ENCODE measurements at regions of chr2 and their contacts with region 1.

Region 1: GRCh38 chr2:108583903-108584520 is 49.7 kb downstream of the LIMS1 start:
- DNase-seq: peak; percentile 71 to 83 (median 79)
- H3K4me3 ChIP-seq: peak overlapping the region in 2 of 3 experiments; percentile 21 to 40
- H3K4me3 Mint-ChIP-seq: peak overlapping the region in 1 of 2 donors; percentile 30
- H3K27ac ChIP-seq: peak overlapping the region; percentile 85 to 99
- H3K27ac Mint-ChIP-seq: peak overlapping the region; percentile 79 to 100 (median 100)
- H3K4me1 ChIP-seq: peaks cover 57 to 62% of the 10 kb centered on the region in 2 donors
- H3K4me1 Mint-ChIP-seq: peaks cover 60% of the 10 kb centered on the region
- H3K27me3 ChIP-seq: no peaks in the 10 kb centered on the region
- H3K27me3 Mint-ChIP-seq: peaks cover 0 to 6% (median 0%) of the 10 kb centered on the region in 3 donors
- CTCF ChIP-seq: peak; percentile 82

Region 2: GRCh38 chr2:107936433-107937359 is 647.3 kb before region 1 on chr2:
- intact Hi-C with region 1: loop called in 1 of 2 experiments (anchors 5 kb)
- DNase-seq: no peak
- H3K4me3 ChIP-seq: no peak overlapping the region
- H3K4me3 Mint-ChIP-seq: no peak overlapping the region
- H3K27ac ChIP-seq: no peak overlapping the region
- H3K27ac Mint-ChIP-seq: no peak overlapping the region
- H3K4me1 ChIP-seq: no peaks in the 10 kb centered on the region
- H3K4me1 Mint-ChIP-seq: no peaks in the 10 kb centered on the region
- H3K27me3 ChIP-seq: no peaks in the 10 kb centered on the region
- H3K27me3 Mint-ChIP-seq: peaks cover 0 to 4% (median 2%) of the 10 kb centered on the region in 3 donors
- CTCF ChIP-seq: peak; percentile 54

Region 3: GRCh38 chr2:108351889-108352288 is 232.1 kb before region 1 on chr2:
- intact Hi-C with region 1: loop called in 1 of 2 experiments (anchors 5 kb)
- DNase-seq: no peak
- H3K4me3 ChIP-seq: no peak overlapping the region
- H3K4me3 Mint-ChIP-seq: no peak overlapping the region
- H3K27ac ChIP-seq: no peak overlapping the region
- H3K27ac Mint-ChIP-seq: no peak overlapping the region
- H3K4me1 ChIP-seq: peaks cover 0 to 8% of the 10 kb centered on the region in 2 donors
- H3K4me1 Mint-ChIP-seq: peaks cover 16% of the 10 kb centered on the region
- H3K27me3 ChIP-seq: no peaks in the 10 kb centered on the region
- H3K27me3 Mint-ChIP-seq: peaks cover 0 to 2% (median 1%) of the 10 kb centered on the region in 3 donors
- CTCF ChIP-seq: no peak

Region 4: DNA sequence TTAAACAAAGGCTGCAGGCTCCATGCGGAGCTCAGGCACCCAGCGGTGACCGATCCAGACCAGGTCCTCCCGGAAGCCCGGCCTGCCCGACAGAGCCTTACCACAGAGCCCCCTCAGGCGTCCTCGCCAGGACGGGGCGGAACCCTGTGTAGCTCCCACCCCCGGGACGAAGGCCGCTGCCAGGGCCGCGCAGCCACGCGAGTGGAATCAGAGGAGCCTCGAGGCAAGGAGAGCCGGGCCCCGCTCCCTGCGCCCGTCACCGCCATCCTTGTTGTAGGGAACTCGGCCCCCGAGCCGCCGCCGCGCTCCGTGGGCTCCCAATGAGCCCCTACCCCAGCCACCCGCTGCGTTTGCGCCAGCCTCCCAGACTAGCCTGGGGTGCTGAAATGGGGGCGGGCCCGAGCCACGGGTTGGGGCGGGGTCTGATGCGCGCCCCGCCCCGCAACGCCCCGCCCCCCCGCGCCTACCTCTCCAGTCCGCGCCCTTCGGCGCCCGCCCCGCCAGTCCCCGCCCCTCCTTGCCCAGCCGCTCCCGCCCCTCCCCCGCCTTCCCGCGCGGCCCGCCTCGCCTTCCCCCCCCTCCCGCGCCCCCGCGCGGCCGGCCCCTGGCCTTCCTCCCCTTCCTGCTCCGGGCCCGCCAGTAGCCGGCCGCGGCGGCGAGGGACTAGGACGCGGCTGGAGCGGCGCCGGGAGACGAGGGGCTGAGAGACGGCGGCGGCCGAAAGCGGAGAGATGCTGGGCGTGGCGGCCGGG is 50.0 kb before region 1 on chr2 and contains the start of gene LIMS1:
- intact Hi-C with region 1: loop called (anchors 5 kb)
- DNase-seq: peak; percentile 83 to 85 (median 84)
- H3K4me3 ChIP-seq: peak within 1 kb of the TSS; percentile 80 to 98 (median 81)
- H3K4me3 Mint-ChIP-seq: peak within 1 kb of the TSS; percentile 94 to 98
- H3K27ac ChIP-seq: peak within 1 kb of the TSS; percentile 72 to 87
- H3K27ac Mint-ChIP-seq: peak within 1 kb of the TSS; percentile 85 to 93 (median 91)
- H3K4me1 ChIP-seq: peaks cover 15 to 25% of the 10 kb centered on the region in 2 donors
- H3K4me1 Mint-ChIP-seq: peaks cover 43% of the 10 kb centered on the region
- H3K27me3 ChIP-seq: no peaks in the 10 kb centered on the region
- H3K27me3 Mint-ChIP-seq: peaks cover 0 to 1% (median 1%) of the 10 kb centered on the region in 3 donors
- CTCF ChIP-seq: no peak
- polyA plus RNA-seq, gene LIMS1: 44.0 to 130 (median 124) TPM

Region 5: DNA sequence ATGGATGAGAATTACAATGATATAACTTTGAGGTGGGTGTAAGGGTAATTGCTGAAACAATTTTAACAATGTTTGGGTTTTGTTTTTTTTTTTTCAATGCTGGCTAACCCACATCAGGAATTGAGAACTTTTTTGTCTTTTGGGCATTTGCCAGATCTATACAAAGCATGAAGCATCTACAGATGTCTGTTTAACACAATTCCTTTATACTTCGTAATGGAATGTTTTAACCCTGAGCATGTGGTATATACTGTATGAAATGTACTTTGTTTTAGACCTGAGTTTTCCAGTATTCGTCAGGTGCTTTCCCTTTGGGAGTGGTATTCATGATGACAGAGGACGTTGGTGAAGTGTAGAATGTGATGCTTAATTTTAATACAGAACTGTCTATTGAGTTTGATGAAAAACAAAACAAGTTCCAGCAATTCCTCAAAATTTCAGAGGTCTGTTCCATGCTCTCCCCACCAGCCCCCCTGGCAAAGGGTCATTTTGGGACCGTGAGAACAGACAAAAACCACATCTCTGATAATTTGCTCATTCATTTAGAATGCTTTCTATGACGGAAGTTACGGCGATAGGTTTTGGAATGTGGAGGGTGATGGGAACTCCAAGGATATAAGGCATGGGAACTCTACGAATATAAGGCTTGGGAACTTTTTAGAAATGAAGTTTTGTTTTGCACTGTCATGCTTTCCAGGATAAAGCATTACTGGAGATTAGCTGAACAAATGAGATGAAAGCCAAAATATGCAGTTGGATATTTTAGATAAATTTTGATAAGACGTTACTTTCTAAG is 35.6 kb before region 1 on chr2:
- intact Hi-C with region 1: no loop called
- DNase-seq: no peak
- H3K4me3 ChIP-seq: no peak overlapping the region
- H3K4me3 Mint-ChIP-seq: no peak overlapping the region
- H3K27ac ChIP-seq: no peak overlapping the region
- H3K27ac Mint-ChIP-seq: peak overlapping the region in 1 of 7 donors; percentile 22
- H3K4me1 ChIP-seq: no peaks in the 10 kb centered on the region
- H3K4me1 Mint-ChIP-seq: no peaks in the 10 kb centered on the region
- H3K27me3 ChIP-seq: no peaks in the 10 kb centered on the region
- H3K27me3 Mint-ChIP-seq: no peaks in the 10 kb centered on the region
- CTCF ChIP-seq: no peak